ENCODE measurements at regions of chr5 and their contacts with region 1.

Region 1: DNA sequence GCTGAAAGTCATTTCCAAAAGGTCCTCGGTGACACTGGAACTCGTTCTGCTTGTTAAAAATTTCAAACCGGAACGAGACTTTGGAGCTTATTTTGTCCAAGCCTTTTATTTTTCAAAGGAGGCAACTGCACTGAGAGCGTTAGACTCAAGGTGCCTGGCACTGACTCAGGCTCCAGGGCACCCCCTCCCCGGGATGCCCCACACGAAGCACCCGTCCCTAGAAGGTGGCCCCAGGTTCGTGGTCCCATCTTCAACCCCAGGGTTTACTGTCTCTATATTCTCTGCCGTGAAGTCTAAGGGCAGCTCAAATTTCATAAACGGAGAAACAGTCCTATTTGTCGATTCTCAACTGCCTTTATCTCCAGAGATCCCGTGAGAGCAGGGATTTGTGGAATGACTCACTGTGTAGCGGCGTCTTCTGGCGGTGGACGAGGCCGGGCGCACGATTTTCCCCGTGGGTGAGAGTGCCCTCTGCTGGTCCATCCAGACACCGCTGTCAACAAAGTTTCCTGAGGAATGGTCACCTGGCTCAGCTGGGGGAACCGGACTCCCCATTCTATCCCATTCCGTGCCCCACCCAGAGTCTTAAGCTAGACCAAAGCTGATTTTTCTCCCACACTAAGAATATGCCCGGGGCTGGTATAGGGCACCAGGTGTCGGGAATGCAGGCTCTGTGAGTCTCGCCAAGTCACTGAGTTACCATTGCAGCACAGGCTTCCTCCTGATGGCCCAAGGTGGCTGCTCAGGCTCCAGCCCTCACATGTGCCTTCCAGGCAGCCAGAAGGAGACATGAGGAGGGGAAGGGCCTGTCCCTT is 27.1 kb upstream of the SLC6A19 start:
- DNase-seq: peak; percentile 88
- ATAC-seq: peak; percentile 75
- H3K4me3 ChIP-seq: peak overlapping the region in 1 of 3 experiments; percentile 13; a peak in 1 of 6 replicates
- H3K27ac ChIP-seq: no peak overlapping the region
- H3K4me1 ChIP-seq: peaks cover 43% of the 10 kb centered on the region
- H3K27me3 ChIP-seq: peaks cover 0 to 15% of the 10 kb centered on the region in 2 experiments; a peak in 3 of 5 replicates
- CTCF ChIP-seq: peak; percentile 90
- EP300 ChIP-seq: no peak
- POLR2A ChIP-seq: no peak
- RAD21 ChIP-seq: peak; percentile 88

Region 2: DNA sequence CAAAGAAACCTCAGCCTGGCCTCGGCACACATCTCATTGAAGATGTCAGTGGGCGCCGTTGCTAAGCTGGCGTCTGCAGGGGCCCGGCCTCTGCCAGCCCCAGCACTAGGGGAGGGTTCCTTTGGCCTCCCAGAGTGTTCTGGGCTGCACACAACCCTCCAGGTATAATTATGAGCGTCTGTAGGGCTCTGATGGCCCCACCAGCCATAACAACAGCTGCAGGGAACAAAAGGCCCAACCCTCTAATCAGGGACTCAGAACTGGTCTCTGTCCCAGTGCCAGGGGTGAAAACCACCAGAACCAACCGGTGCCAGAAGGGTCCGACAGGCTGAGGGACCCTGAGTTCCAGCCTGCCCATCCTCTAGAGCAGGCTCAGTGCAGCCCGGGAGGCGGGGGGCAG is 23.0 kb before region 1 on chr5:
- CTCF ChIA-PET with region 1: no interaction called
- POLR2A ChIA-PET with region 1: no interaction called
- in situ Hi-C with region 1: no loop called
- intact Hi-C with region 1: no loop called
- DNase-seq: no peak
- ATAC-seq: no peak
- H3K4me3 ChIP-seq: no peak overlapping the region
- H3K27ac ChIP-seq: no peak overlapping the region
- H3K4me1 ChIP-seq: peaks cover 31% of the 10 kb centered on the region
- H3K27me3 ChIP-seq: peaks cover 6 to 71% of the 10 kb centered on the region in 2 experiments
- CTCF ChIP-seq: no peak
- EP300 ChIP-seq: no peak
- POLR2A ChIP-seq: no peak
- RAD21 ChIP-seq: no peak

Region 3: GRCh38 chr5:1161833-1162229 is 12.5 kb before region 1 on chr5:
- CTCF ChIA-PET with region 1: no interaction called
- POLR2A ChIA-PET with region 1: interaction called, 11 read pairs
- in situ Hi-C with region 1: no loop called
- intact Hi-C with region 1: no loop called
- DNase-seq: no peak
- ATAC-seq: peak; percentile 34
- H3K4me3 ChIP-seq: peak overlapping the region; percentile 16 to 59 (median 18); a peak in 5 of 6 replicates
- H3K27ac ChIP-seq: peak overlapping the region; percentile 28
- H3K4me1 ChIP-seq: peaks cover 72% of the 10 kb centered on the region
- H3K27me3 ChIP-seq: peaks cover 9 to 53% of the 10 kb centered on the region in 2 experiments; a peak in 4 of 5 replicates
- CTCF ChIP-seq: no peak
- EP300 ChIP-seq: no peak
- POLR2A ChIP-seq: no peak
- RAD21 ChIP-seq: no peak

Region 4: DNA sequence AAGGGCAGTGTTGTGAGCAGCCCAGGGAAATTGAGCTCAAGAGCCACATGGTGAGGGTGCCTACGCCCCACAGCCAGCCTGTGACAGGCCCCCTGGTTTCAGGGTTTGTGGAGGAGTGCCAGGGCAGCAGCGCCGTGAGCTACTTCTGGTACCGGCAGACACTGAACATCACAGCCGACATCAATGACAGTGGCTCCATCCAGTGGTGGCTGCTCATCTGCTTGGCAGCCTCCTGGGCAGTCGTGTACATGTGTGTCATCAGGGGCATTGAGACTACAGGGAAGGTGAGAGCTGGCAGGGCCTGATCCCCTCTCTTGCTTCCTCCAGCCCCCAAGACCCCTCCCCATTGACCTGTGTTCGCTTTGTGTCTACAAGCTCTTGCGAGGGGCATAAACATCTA is 61.0 kb after region 1 on chr5:
- CTCF ChIA-PET with region 1: interaction called, 14 read pairs
- POLR2A ChIA-PET with region 1: no interaction called
- in situ Hi-C with region 1: loop called (anchors 5 kb)
- intact Hi-C with region 1: no loop called
- DNase-seq: peak; percentile 48
- ATAC-seq: peak; percentile 88
- H3K4me3 ChIP-seq: no peak overlapping the region
- H3K27ac ChIP-seq: no peak overlapping the region
- H3K4me1 ChIP-seq: peaks cover 8% of the 10 kb centered on the region; the same call in 1 of the 2 replicates
- H3K27me3 ChIP-seq: peaks cover 16 to 62% of the 10 kb centered on the region in 2 experiments
- CTCF ChIP-seq: peak; percentile 88
- EP300 ChIP-seq: no peak
- POLR2A ChIP-seq: no peak
- RAD21 ChIP-seq: peak; percentile 66